Activated T-helper 2 cell treated with anti-CD3 and anti-CD28 coated beads, Interferon-gamma antibody, Interleukin-2, Interleukin-4, amounts not matched to agents 10 μg/mL and 5 μg/mL and 100 μg/mL, durations not matched to agents 14 hours and 24 hours and 36 hours (primary cell): ENCODE measurements at regions of chr1 and their contacts with region 1.

Region 1: DNA sequence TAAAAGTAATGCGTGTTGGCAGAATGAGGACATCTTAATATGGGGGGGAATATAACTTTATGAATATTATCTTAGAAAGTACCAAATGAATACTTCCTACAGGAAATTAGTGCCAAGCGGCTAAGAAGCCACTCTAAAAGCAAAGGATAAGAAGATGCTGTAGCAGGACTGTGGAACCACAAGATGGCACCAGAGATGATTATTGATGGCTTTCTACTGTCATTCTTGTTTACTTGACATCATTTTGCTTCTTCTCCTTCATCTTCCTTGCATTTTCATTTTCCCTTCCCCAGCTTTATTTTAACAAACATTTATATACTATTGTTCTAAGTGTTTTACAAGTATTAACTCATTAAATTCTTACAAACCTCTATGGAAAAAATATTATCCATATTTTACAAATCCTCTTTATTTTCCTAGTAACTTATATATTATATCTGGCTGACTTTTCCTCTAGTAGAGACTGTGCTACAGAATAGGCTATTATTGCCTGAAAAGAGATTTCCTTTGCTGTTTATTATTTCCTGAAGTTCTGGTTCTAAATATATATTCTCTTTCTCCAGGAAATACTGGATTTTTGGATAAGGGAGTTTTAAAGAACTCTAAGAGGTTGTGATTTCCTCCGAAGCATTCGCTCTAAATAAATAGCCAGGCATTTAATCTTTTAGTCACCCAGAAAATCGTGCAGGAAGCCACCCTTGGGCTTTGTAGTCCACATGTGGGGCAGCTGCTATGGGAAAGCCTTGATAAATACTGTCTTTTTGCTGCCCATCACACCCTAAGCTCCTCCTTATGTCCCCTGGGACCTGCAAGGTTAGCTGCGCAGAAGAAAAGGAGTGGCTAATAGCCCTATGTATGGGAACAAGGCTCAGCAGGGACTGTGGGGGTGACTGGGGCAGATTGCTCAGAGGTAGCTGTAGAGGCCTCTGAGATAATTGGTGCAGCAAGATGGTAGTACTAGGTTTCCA is 69.8 kb downstream of the TPR start:
- DNase-seq: no peak
- H3K4me3 Mint-ChIP-seq: no peak overlapping the region
- H3K27ac Mint-ChIP-seq: peak overlapping the region; percentile 59
- H3K4me1 Mint-ChIP-seq: peaks cover 45% of the 10 kb centered on the region
- H3K27me3 Mint-ChIP-seq: no peaks in the 10 kb centered on the region

Region 2: GRCh38 chr1:186155594-186155993 is 149.7 kb before region 1 on chr1:
- intact Hi-C with region 1: loop called (anchors 10 kb)
- DNase-seq: no peak
- H3K4me3 Mint-ChIP-seq: no peak overlapping the region
- H3K27ac Mint-ChIP-seq: no peak overlapping the region
- H3K4me1 Mint-ChIP-seq: no peaks in the 10 kb centered on the region
- H3K27me3 Mint-ChIP-seq: peaks cover 3% of the 10 kb centered on the region

Region 3: GRCh38 chr1:186272486-186272885 is 32.8 kb before region 1 on chr1:
- intact Hi-C with region 1: loop called (anchors 2 kb)
- DNase-seq: no peak
- H3K4me3 Mint-ChIP-seq: no peak overlapping the region
- H3K27ac Mint-ChIP-seq: no peak overlapping the region
- H3K4me1 Mint-ChIP-seq: no peaks in the 10 kb centered on the region
- H3K27me3 Mint-ChIP-seq: peaks cover 2% of the 10 kb centered on the region

Region 4: DNA sequence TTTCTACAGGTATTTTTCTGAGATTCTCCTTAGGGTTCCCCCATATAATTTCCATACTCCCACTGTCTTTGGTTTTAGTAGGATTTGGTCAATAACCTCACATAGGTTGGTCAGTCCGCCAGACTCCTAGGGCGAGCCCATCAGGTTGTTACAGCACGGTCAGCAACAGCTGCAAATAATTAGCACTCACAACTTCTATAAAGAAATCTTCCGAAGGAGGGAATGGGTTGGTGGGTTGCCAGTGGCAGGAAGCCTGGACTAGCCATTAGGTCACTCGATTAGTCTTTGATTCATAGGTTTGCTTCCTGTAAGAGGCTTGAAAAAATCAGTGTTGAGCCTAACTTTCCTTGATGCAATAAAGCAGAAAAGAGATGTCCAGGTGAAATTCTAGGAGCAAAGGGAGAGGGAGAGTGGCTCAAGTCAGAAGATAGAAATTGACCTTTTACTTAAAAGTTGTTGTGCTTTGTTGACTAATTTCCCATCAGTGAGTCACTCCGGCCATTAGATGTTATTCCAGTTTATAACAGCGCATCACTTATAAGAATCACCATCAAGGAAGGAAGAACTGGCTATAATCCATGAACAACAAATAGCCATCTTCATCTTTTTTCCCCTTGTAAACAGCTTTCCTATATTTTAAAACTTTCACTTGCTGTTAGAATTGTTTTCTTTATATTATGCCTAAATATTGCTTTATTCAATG is 18.5 kb before region 1 on chr1:
- intact Hi-C with region 1: loop called (anchors 1 kb)
- DNase-seq: no peak
- H3K4me3 Mint-ChIP-seq: no peak overlapping the region
- H3K27ac Mint-ChIP-seq: no peak overlapping the region
- H3K4me1 Mint-ChIP-seq: peaks cover 49% of the 10 kb centered on the region
- H3K27me3 Mint-ChIP-seq: no peaks in the 10 kb centered on the region

Region 5: GRCh38 chr1:186325239-186325638 is 20.0 kb after region 1 on chr1:
- intact Hi-C with region 1: loop called (anchors 2 kb)
- DNase-seq: no peak
- H3K4me3 Mint-ChIP-seq: no peak overlapping the region
- H3K27ac Mint-ChIP-seq: no peak overlapping the region
- H3K4me1 Mint-ChIP-seq: peaks cover 23% of the 10 kb centered on the region
- H3K27me3 Mint-ChIP-seq: no peaks in the 10 kb centered on the region

Region 6: GRCh38 chr1:186337554-186337953 is 32.3 kb after region 1 on chr1:
- intact Hi-C with region 1: no loop called
- DNase-seq: no peak
- H3K4me3 Mint-ChIP-seq: no peak overlapping the region
- H3K27ac Mint-ChIP-seq: no peak overlapping the region
- H3K4me1 Mint-ChIP-seq: peaks cover 1% of the 10 kb centered on the region
- H3K27me3 Mint-ChIP-seq: no peaks in the 10 kb centered on the region

Region 7: GRCh38 chr1:186375088-186375953 is 70.1 kb after region 1 on chr1 and contains the starts of genes ODR4 and TPR:
- intact Hi-C with region 1: loop called (anchors 2 kb)
- DNase-seq: peak; percentile 97
- H3K4me3 Mint-ChIP-seq: peak within 1 kb of the TSS; percentile 96
- H3K27ac Mint-ChIP-seq: peak within 1 kb of the TSS; percentile 97
- H3K4me1 Mint-ChIP-seq: peaks cover 31% of the 10 kb centered on the region
- H3K27me3 Mint-ChIP-seq: no peaks in the 10 kb centered on the region
- total RNA-seq, gene ODR4: 16.1 and 17.0 TPM in 2 replicates
- total RNA-seq, gene TPR: 154 and 160 TPM in 2 replicates